OCI-LY7 (cell line): ENCODE measurements at regions of chr16 and their contacts with region 1.

Region 1: DNA sequence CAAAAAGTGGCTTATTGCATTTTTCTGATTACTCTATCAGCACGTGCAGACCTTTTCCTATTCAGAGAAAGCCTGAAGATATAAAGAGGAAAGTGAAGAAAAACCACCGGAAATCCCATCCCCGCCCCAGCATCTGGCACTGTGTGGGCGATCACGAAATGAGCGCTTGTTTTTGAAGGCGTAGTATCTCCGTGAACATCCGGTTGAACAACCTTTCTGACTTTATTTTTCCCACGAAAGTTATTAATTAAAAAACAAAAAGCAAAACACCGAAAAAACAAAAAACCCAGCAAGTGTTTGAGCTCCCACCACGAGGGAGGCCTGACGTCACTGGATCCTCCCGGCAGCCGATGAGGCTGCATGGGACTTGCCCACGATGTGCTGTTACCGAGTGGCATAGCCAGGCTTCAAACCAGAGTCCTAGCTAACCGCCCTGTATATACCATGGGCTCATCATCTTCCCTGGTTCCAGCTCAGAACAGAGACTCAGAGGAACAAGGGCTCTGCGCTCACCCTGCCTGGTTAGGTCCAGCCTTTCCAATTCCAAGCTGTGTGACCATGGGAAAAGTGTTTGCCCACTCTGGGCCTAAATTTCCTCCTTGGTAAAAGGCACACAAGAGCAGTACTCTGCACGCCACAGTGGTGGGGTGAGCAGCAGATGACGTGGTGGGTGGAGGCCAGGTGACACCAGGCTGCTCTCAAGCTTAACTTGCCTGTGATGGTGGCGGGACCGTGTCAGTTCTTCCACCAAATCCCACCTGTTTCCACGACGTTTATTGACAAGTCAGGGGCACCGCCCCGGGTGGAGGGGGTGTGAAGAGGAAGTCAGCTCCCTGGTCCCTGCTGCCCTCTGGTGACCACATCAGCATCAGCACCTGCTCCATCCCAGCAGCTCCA is 34.3 kb upstream of the IL21R start:
- DNase-seq: peak; percentile 85
- H3K4me3 ChIP-seq: peak overlapping the region; percentile 55
- H3K27ac ChIP-seq: peak overlapping the region; percentile 58
- H3K4me1 ChIP-seq: peaks cover 19% of the 10 kb centered on the region
- CTCF ChIP-seq: peak; percentile 82

Region 2: GRCh38 chr16:27109666-27110523 is 257.8 kb before region 1 on chr16:
- CTCF ChIA-PET with region 1: no interaction called
- POLR2A ChIA-PET with region 1: no interaction called
- intact Hi-C with region 1: loop called (anchors 5 kb)
- DNase-seq: peak; percentile 75
- H3K4me3 ChIP-seq: peak overlapping the region; percentile 62
- H3K27ac ChIP-seq: no peak overlapping the region
- H3K4me1 ChIP-seq: peaks cover 30% of the 10 kb centered on the region
- CTCF ChIP-seq: peak; percentile 77

Region 3: DNA sequence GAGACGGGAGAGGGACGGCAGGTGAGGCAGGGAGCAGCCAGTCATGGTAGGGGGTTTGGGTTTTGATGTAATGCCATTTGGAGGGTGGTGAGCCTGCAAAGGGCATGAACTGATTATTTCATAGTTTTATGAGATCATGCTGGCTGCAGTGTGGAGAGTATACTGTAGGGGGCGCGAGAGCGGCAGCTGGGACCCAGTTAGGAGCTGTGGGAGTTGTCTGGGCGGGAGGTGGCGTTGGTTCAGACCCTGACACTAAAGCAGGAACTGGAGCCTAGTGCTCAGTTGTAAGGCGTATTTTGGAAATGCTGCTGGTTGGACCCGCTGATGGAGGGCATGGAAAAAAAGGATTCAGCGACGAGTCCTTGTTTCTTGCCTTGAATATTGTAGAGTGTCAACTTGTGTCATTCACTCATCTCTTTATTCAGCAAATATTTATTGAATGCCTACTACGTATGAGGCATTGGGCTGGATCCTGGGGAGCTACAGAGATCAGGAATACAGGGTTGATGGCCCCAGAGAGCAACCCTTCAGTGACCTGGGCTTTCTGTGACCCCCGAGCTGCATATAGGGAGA is 188.1 kb before region 1 on chr16:
- CTCF ChIA-PET with region 1: interaction called, 7 read pairs
- POLR2A ChIA-PET with region 1: no interaction called
- intact Hi-C with region 1: loop called (anchors 1 kb)
- DNase-seq: peak; percentile 87
- H3K4me3 ChIP-seq: no peak overlapping the region
- H3K27ac ChIP-seq: no peak overlapping the region
- H3K4me1 ChIP-seq: peaks cover 33% of the 10 kb centered on the region
- CTCF ChIP-seq: peak; percentile 99

Region 4: GRCh38 chr16:27301236-27301861 is 66.4 kb before region 1 on chr16:
- CTCF ChIA-PET with region 1: no interaction called
- POLR2A ChIA-PET with region 1: interaction called, 3 read pairs
- intact Hi-C with region 1: loop called (anchors 2 kb)
- DNase-seq: no peak
- H3K4me3 ChIP-seq: peak overlapping the region; percentile 0
- H3K27ac ChIP-seq: peak overlapping the region; percentile 86
- H3K4me1 ChIP-seq: peaks cover 82% of the 10 kb centered on the region
- CTCF ChIP-seq: no peak

Region 5: GRCh38 chr16:27449434-27450195 is 81.9 kb after region 1 on chr16:
- CTCF ChIA-PET with region 1: no interaction called
- POLR2A ChIA-PET with region 1: no interaction called
- intact Hi-C with region 1: no loop called
- DNase-seq: peak; percentile 23
- H3K4me3 ChIP-seq: no peak overlapping the region
- H3K27ac ChIP-seq: no peak overlapping the region
- H3K4me1 ChIP-seq: peaks cover 27% of the 10 kb centered on the region
- CTCF ChIP-seq: no peak

Region 6: DNA sequence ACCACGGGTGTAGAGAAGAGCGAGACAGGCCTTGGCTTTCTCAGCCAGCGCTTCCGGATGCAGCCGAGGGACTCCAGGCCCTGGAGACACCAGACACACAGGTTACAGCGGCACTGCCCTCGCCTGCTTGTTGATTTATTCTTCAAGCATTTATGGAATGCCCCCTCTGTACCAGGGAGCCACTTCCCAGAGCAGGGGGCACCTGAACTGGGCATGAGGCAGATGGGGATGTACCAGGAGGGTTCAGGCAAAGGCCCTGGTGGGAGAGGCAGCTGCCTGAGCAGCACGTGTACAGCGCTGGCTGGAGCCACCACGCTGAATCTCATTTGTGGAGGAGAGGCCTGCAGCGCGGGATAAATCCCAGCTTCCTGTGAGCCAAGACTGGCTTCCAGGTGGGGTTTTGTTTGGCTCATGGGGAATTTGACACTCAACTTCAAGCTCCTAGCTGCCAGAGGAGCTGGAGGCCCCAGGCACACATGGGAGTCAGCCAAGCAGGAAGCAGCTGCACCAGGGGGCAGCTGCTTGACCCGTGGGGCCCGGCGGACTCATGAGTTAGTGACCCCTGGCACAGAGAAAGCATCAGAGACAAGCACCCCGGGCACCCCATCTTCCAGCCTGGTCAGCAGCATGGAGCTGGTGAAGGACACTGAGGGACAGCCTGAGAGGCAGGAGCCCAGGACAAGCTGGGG is 93.9 kb after region 1 on chr16:
- CTCF ChIA-PET with region 1: no interaction called
- POLR2A ChIA-PET with region 1: no interaction called
- intact Hi-C with region 1: loop called (anchors 1 kb)
- DNase-seq: no peak
- H3K4me3 ChIP-seq: no peak overlapping the region
- H3K27ac ChIP-seq: no peak overlapping the region
- H3K4me1 ChIP-seq: no peaks in the 10 kb centered on the region
- CTCF ChIP-seq: no peak